PC-3 (cell line): ENCODE measurements at regions of chr4 and their contacts with region 1.

Region 1: DNA sequence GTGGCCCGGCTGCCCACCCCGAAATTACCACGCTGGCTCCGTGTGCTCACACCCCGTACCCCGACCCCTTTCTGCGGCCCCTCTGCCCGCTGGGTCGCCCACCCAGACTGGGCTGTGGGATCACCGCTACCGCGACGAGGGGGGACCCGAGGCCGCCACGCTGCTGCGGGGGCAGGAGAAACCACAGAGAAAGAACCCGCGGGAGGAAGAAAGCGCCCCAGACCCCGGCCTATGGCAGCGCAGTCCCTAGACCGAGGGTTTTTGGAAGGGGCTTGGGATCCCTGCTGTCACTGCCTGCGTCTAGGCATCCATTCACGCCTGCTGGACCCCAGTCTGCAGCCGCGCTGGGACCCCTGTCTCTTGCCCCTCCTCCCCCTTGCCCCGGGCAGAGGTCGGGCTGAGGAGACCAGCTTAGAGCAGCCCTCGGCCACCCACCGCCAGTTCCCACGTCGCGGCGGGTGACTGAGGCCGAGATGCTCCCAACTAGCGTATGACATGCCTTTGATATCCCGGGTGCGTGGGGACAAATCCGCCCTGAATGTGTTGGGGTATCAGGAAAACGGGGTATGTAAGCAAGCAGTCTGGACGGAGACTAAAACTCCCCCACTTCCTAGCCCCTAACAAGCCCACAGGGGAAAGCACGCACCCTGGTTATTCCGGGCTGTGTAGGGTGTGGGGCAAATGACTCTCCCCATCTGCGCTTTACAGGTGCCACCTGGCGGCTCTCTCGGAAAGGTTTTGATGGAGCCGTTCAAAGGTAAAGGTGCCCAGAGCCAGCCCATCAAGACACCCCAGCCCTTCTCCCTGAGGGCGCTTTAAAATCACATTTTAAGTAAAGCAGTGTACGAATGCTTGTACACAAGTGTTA is 862 bp upstream of the INPP4B start:
- DNase-seq: peak; percentile 90
- ATAC-seq: peak; percentile 75
- H3K4me3 ChIP-seq: peak overlapping the region; percentile 92
- H3K27ac ChIP-seq: peak overlapping the region; percentile 17
- H3K4me1 ChIP-seq: peaks cover 34% of the 10 kb centered on the region
- H3K27me3 ChIP-seq: no peaks in the 10 kb centered on the region
- CTCF ChIP-seq: peak; percentile 87

Region 2: GRCh38 chr4:141307241-141307689 is 1539.7 kb before region 1 on chr4:
- CTCF ChIA-PET with region 1: no interaction called
- POLR2A ChIA-PET with region 1: no interaction called
- intact Hi-C with region 1: loop called (anchors 5 kb)
- DNase-seq: peak; percentile 77
- ATAC-seq: peak; percentile 98
- H3K4me3 ChIP-seq: no peak overlapping the region
- H3K27ac ChIP-seq: no peak overlapping the region
- H3K4me1 ChIP-seq: peaks cover 4% of the 10 kb centered on the region; the same call in 1 of the 2 replicates
- H3K27me3 ChIP-seq: no peaks in the 10 kb centered on the region
- CTCF ChIP-seq: peak; percentile 75

Region 3: GRCh38 chr4:141860974-141861373 is 986.0 kb before region 1 on chr4:
- CTCF ChIA-PET with region 1: no interaction called
- POLR2A ChIA-PET with region 1: no interaction called
- intact Hi-C with region 1: loop called (anchors 1 kb)
- DNase-seq: peak; percentile 61
- ATAC-seq: peak; percentile 45
- H3K4me3 ChIP-seq: no peak overlapping the region
- H3K27ac ChIP-seq: no peak overlapping the region
- H3K4me1 ChIP-seq: peaks cover 20% of the 10 kb centered on the region
- H3K27me3 ChIP-seq: no peaks in the 10 kb centered on the region
- CTCF ChIP-seq: peak; percentile 81

Region 4: DNA sequence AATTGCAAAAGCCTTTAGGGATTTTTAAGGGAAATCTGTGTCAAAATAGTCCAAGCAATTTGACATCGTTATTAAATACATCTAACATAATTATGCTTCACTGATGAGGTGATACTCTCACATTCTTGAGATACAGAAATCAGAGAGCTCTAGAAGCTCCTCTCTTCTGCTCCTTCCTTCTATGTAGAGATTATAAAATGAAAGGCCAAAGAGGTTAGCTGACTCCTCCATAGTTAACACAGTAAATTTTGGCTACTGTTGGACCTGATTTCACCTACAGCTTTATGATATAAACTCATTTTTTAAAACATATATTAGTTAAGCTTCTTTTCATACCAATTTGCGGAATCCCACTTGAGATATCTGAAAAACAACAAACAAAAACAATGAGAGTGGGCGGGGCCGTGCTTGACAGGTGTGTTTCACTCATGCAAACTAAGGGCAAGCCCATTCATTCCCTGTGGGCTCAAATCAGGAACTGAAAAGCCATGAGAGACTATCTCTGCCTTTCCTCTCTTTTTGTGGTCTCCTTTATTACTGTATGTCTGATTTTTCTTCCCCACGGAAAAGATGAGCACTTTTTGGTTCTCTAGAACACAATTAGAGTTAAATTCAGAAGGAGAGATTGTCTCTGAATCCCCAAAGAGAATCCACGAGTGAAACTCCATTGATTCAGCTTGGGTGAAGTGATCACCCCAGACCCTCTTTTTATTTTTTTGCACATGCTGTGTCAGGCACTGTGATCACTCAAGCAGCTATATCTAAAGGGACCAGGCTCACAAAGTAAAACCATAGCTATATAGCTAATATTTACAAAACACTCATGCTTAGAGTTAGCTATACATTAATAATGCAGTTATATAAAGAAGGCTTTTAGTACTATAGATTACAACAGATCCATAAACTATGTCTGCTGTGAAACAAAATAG is 644.3 kb before region 1 on chr4:
- CTCF ChIA-PET with region 1: no interaction called
- POLR2A ChIA-PET with region 1: no interaction called
- intact Hi-C with region 1: loop called (anchors 10 kb)
- DNase-seq: no peak
- ATAC-seq: no peak
- H3K4me3 ChIP-seq: no peak overlapping the region
- H3K27ac ChIP-seq: no peak overlapping the region
- H3K4me1 ChIP-seq: no peaks in the 10 kb centered on the region
- H3K27me3 ChIP-seq: no peaks in the 10 kb centered on the region
- CTCF ChIP-seq: no peak

Region 5: DNA sequence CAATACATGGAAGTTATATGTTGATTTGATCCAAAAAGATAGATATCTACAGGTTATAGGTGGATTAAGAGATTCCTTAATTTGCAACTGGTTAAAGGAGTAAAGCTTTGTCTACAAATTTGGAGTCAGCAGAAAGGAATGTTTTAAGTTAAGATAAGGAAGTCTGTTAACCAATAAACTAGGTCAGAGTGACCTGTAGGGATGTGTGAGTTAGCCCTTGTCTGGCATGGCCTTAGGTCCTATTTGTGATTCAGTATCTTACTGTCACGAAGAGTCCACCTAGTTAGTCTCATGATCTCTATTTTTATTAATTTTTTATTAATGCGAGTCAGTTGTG is 231.7 kb before region 1 on chr4:
- CTCF ChIA-PET with region 1: no interaction called
- POLR2A ChIA-PET with region 1: no interaction called
- intact Hi-C with region 1: loop called (anchors 10 kb)
- DNase-seq: peak; percentile 97
- ATAC-seq: peak; percentile 90
- H3K4me3 ChIP-seq: peak overlapping the region; percentile 50
- H3K27ac ChIP-seq: peak overlapping the region; percentile 98
- H3K4me1 ChIP-seq: peaks cover 44% of the 10 kb centered on the region
- H3K27me3 ChIP-seq: no peaks in the 10 kb centered on the region
- CTCF ChIP-seq: no peak

Region 6: DNA sequence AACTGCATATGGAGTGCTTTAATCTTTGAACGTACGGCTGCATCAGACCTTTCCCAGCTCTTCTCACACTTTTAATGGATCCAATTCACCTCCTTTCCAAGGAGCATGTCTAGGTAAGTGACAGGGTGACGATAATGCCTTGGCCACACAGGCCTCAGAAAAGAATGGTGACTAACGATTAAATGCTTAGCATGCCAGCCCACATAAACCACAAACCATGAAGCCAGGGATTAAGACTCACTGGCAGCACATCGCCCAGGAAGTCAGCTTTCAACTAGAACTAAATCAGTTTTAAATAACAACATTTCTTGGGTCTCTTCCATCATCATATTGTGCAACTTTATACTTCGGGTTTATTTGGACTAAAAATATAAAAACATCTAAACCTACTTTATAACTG is 29.5 kb before region 1 on chr4:
- CTCF ChIA-PET with region 1: no interaction called
- POLR2A ChIA-PET with region 1: no interaction called
- intact Hi-C with region 1: no loop called
- DNase-seq: peak; percentile 97
- ATAC-seq: peak; percentile 100
- H3K4me3 ChIP-seq: peak overlapping the region; percentile 40
- H3K27ac ChIP-seq: peak overlapping the region; percentile 75
- H3K4me1 ChIP-seq: peaks cover 33% of the 10 kb centered on the region
- H3K27me3 ChIP-seq: no peaks in the 10 kb centered on the region
- CTCF ChIP-seq: no peak